K562 (cell line): ENCODE measurements at regions of chr7 and their contacts with region 1.

Region 1: DNA sequence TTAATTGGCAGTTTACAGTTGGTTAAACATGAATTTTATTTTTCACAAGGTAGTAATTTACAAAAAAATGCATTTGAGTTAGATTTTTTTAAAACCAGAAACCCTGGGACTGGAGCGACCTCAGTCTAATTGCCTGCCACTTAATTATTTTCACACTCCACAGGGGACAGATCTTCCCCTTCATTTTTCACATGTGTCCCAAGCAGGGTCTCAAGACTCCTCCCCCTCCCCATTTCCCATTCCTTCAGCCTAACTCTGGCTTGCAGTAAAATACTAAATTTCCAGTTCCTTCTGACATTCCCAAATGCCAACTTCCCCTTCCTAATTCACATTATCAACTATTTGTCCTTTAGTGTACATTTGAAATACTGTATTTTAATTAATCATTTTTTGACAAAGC is 948 bp downstream of the ZNF138 start:
- DNase-seq: no peak
- ATAC-seq: no peak
- H3K4me3 ChIP-seq: peak overlapping the region; percentile 77
- H3K27ac ChIP-seq: peak overlapping the region; percentile 88; the same call in 2 of the 3 replicates
- H3K4me1 ChIP-seq: peaks cover 10 to 17% of the 10 kb centered on the region in 2 experiments; a peak in 4 of 5 replicates
- H3K27me3 ChIP-seq: no peaks in the 10 kb centered on the region
- CTCF ChIP-seq: no peak
- EP300 ChIP-seq: no peak
- POLR2A ChIP-seq: no peak
- RAD21 ChIP-seq: no peak

Region 2: DNA sequence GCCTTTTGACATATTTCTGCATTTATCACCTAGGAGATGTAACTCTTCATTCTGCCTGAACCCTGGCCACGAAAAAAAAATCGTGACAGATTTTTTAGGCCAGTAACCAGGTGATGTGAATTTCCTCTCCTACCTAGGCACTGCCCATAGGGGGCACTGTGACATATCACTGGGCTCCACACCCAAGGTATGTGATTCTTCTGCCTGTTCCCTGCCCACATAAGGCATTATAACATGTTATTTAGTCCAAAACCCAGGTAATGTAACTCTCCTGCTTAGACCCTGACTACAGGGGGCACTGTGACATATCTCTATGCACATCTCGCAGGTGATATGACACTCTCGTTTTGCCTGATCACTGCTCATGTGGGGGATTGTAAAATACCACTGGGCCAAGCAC is 158.8 kb before region 1 on chr7:
- CTCF ChIA-PET with region 1: no interaction called
- POLR2A ChIA-PET with region 1: no interaction called
- in situ Hi-C with region 1: no loop called
- intact Hi-C with region 1: loop called (anchors 5 kb)
- DNase-seq: peak in 3 of 4 experiments; percentile 8 to 16 (median 12)
- ATAC-seq: no peak; the same call in 2 of the 3 replicates
- H3K4me3 ChIP-seq: no peak overlapping the region
- H3K27ac ChIP-seq: no peak overlapping the region
- H3K4me1 ChIP-seq: no peaks in the 10 kb centered on the region
- H3K27me3 ChIP-seq: no peaks in the 10 kb centered on the region
- CTCF ChIP-seq: peak; percentile 17 to 64 (median 47); a peak in 5 of 6 replicates
- EP300 ChIP-seq: no peak
- POLR2A ChIP-seq: no peak
- RAD21 ChIP-seq: peak in 1 of 2 experiments; percentile 27; a peak in 1 of 4 replicates